Heart left ventricle (tissue), 16 donors: ENCODE measurements at regions of chr9 and their contacts with region 1.

Region 1: GRCh38 chr9:36337865-36338264 is 62.2 kb downstream of the RNF38 start:
- DNase-seq: peak in 4 of 5 donors; percentile 58 to 70 (median 60)
- ATAC-seq: peak; percentile 94 to 96 (median 96)
- H3K4me3 ChIP-seq: no peak overlapping the region
- H3K27ac ChIP-seq: peak overlapping the region in 10 of 12 donors; percentile 6 to 74 (median 41)
- H3K4me1 ChIP-seq: peaks cover 0 to 16% (median 4%) of the 10 kb centered on the region in 12 donors
- H3K27me3 ChIP-seq: no peaks in the 10 kb centered on the region
- CTCF ChIP-seq: no peak
- POLR2A ChIP-seq: no peak

Region 2: DNA sequence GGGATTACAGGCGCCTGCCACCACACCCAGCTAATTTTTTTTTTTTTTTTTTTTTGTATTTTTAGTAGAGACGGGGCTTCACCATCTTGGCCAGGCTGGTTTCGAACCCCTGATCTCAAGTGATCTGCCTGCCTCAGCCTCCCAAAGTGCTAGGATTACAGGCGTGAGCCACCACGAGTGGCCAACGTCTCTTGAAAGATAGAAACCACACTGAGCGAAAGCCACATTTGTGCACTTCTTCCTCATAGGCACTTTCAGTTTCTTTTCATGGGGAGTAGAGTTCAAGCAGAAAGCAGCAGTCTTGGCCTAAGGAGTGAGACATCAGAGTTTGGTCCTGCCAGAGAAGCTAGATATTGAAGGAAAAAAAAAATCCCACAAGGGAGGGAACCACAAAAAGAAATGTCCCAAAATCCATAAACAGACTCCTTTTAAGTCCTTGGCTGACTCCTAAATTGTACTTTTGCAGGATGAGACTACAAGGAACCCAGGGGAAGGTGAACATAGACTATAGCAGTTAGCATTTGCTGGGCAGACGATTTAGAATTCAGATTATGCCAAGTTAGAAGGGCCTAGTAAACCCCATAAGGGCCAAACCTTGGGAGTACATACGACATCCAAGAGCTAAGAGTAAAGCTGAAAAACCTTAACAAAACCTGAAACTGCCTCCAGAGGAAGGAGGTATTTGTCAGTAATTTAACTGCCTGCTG is 245.2 kb before region 1 on chr9:
- intact Hi-C with region 1: loop called in 1 of 10 experiments (anchors 10 kb)
- DNase-seq: no peak
- ATAC-seq: peak in 1 of 4 donors; percentile 49
- H3K4me3 ChIP-seq: no peak overlapping the region
- H3K27ac ChIP-seq: peak overlapping the region in 1 of 12 donors; percentile 84
- H3K4me1 ChIP-seq: peaks cover 0 to 31% (median 11%) of the 10 kb centered on the region in 12 donors
- H3K27me3 ChIP-seq: no peaks in the 10 kb centered on the region
- CTCF ChIP-seq: no peak
- POLR2A ChIP-seq: no peak

Region 3: DNA sequence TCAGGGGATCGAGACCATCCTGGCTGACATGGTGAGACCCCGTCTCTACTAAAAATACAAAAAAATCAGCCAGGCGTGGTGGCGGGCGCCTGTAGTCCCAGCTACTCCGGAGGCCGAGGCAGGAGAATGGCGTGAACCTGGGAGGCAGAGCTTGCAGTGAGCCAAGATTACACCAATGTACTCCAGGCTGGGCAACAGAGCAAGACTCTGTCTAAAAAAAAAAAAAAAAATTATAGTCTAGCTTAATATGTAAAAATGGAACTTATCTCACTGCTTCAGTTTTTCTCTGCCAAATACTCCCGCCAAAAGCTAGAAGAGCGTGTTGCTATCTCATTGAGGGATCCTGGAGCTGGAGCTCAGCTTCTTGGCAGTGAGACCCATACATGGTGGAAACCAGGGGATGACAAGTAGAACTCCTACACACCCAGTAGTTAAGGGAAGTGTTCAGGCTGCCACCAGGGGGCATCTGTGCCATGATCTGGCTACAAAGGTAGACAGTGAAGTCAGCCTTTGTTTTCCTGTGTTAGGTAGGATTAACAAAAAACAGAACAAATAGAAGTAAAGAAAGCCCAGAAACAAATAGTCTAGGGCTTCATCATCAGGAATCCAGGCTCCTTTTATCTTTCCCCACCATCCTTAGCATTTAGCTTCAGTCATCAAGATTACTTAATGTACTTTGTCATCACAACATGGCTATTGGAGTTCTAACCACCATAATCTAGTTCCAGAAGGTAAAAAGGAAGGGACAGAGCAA is 234.9 kb before region 1 on chr9:
- intact Hi-C with region 1: loop called in 2 of 10 experiments (anchors 10 kb)
- DNase-seq: peak; percentile 76 to 89 (median 80)
- ATAC-seq: peak; percentile 80 to 97 (median 94)
- H3K4me3 ChIP-seq: no peak overlapping the region
- H3K27ac ChIP-seq: peak overlapping the region in 3 of 12 donors; percentile 3 to 15 (median 11)
- H3K4me1 ChIP-seq: peaks cover 0 to 9% (median 0%) of the 10 kb centered on the region in 12 donors
- H3K27me3 ChIP-seq: no peaks in the 10 kb centered on the region
- CTCF ChIP-seq: peak; percentile 62 to 88 (median 78)
- POLR2A ChIP-seq: no peak

Region 4: DNA sequence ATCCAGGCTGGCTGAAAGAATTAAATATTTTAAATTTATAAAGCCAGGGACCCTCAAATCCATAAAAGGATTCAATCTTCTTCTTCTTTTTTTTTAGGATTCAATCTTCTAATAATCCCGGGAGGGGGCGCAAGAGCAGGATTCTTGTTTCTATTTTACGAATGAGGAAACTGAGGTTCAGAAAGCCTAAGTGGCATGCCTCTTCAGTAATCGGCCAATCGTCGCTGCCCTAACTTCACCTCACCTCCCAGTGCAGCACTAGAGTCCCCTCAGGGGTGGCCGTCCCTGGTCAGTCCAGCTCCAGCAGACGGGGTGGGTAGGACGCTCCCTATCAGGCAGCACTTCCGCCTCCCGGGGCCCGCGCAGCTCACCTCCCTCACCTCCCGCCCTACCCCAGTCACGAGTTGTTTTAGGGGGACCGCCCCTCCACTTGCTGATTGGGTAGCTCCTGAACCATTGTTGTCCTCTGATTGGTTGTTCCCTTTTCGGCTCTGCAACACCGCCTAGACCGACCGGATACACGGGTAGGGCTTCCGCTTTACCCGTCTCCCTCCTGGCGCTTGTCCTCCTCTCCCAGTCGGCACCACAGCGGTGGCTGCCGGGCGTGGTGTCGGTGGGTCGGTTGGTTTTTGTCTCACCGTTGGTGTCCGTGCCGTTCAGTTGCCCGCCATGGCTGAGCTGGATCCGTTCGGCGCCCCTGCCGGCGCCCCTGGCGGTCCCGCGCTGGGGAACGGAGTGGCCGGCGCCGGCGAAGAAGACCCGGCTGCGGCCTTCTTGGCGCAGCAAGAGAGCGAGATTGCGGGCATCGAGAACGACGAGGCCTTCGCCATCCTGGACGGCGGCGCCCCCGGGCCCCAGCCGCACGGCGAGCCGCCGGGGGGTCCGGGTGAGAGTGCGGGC is 147.2 kb before region 1 on chr9 and contains the start of gene CLTA:
- intact Hi-C with region 1: loop called in 2 of 10 experiments (anchors 5 to 10 kb)
- DNase-seq: peak; percentile 95 to 98 (median 98)
- ATAC-seq: peak; percentile 98 to 100 (median 99)
- H3K4me3 ChIP-seq: peak within 1 kb of the TSS; percentile 69 to 99 (median 88)
- H3K27ac ChIP-seq: peak within 1 kb of the TSS; percentile 66 to 97 (median 92)
- H3K4me1 ChIP-seq: peaks cover 16 to 45% (median 40%) of the 10 kb centered on the region in 12 donors
- H3K27me3 ChIP-seq: no peaks in the 10 kb centered on the region
- CTCF ChIP-seq: peak; percentile 12 to 70 (median 57)
- POLR2A ChIP-seq: peak; percentile 62 to 92
- total RNA-seq, gene CLTA: 43.8 to 123 (median 61.8) TPM

Region 5: GRCh38 chr9:36470643-36471290 is 132.9 kb after region 1 on chr9:
- intact Hi-C with region 1: no loop called
- DNase-seq: peak; percentile 61 to 73 (median 66)
- ATAC-seq: peak; percentile 82 to 96 (median 92)
- H3K4me3 ChIP-seq: peak overlapping the region in 10 of 12 donors; percentile 21 to 57 (median 47)
- H3K27ac ChIP-seq: peak overlapping the region; percentile 25 to 95 (median 72)
- H3K4me1 ChIP-seq: peaks cover 0 to 35% (median 19%) of the 10 kb centered on the region in 12 donors
- H3K27me3 ChIP-seq: no peaks in the 10 kb centered on the region
- CTCF ChIP-seq: no peak
- POLR2A ChIP-seq: no peak